Endothelial cell of umbilical vein (primary cell): ENCODE measurements at regions of chr12 and their contacts with region 1.

Region 1: DNA sequence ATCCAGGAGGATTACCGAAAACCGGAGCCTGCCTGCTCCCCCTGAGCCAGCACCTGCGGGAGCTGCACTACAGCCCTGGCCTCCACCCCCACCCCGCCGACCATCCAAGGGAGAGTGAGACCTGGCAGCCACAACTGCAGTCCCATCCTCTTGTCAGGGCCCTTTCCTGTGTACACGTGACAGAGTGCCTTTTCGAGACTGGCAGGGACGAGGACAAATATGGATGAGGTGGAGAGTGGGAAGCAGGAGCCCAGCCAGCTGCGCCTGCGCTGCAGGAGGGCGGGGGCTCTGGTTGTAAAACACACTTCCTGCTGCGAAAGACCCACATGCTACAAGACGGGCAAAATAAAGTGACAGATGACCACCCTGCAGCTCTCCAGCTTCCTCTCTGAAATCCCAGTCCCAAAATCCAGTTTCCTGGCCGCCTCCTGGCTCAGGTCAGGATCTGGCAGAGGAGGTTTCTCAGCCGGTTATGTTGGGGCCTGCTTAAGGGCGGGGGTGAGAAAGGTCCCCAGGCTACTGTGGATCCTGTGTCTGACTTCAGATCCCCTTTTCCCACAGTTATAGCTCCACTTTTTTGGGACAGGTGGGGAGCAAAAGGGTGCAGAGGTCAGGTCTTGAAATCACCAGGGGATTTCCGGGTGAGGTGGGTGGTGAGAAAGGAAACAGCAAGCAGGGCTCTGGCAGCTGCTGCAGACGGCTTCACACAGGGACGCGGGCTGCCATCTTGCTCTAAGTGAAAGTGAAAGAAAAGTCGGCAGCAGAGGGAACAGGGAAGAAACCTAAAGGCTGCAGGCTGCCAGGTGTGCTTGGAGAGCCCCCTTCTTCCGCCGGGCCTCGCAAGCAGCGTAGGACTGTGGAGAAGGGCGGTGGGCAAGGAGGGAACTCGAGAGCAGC is at the start of gene TAPBPL:
- DNase-seq: peak; percentile 89
- H3K4me3 ChIP-seq: peak within 1 kb of the TSS; percentile 6 to 51 (median 31)
- H3K27ac ChIP-seq: peak within 1 kb of the TSS; percentile 62
- H3K4me1 ChIP-seq: peaks cover 27% of the 10 kb centered on the region
- H3K27me3 ChIP-seq: no peaks in the 10 kb centered on the region
- CTCF ChIP-seq: no peak
- POLR2A ChIP-seq: peak; percentile 41
- total RNA-seq, gene TAPBPL: 9.9 and 11.7 TPM in 2 replicates

Region 2: DNA sequence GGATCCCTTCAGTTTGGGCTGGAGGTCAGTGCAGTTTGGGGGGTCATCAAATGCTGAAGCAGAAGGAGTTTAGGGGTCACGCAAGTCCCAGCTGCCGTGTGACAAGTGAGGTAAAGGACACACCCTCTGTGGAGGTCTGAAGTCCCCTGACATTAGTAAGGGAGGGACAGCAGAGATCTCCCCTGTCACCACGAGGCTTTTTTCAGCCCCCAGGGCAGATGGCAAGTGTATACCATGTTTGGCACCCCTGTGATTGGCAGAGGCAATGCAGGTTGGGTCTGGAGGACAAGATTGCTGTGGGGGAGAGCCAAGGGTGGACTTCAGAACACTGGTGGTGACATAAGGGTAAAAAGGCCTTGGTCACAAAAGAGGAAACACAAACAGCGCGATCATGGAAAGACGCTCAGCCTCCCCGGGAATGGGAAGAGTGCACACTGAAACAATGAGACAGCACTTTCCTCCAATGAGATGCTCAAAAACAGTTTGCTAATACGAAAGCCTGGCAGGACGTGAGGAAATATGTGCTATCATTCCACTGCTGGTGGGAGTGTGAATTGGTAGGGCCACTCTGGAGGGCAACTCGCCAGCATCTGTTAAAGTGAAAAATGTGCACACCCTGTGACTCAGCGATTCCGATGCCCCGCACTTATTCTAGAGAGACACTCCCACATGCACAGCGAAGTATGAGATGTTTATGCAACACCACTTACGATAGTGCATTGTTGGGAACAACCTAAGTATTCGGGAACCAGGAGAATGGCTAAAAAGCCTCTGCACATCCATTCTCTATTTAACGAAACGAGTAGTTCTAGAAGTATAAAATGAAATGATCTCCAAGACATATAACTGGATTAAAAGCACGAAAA is 21.2 kb before region 1 on chr12:
- CTCF ChIA-PET with region 1: interaction called, 5 read pairs
- POLR2A ChIA-PET with region 1: no interaction called
- dilution Hi-C with region 1: no loop called
- intact Hi-C with region 1: loop called (anchors 1 kb)
- DNase-seq: peak; percentile 97
- H3K4me3 ChIP-seq: peak overlapping the region in 1 of 3 experiments; percentile 4
- H3K27ac ChIP-seq: peak overlapping the region; percentile 96
- H3K4me1 ChIP-seq: peaks cover 18% of the 10 kb centered on the region
- H3K27me3 ChIP-seq: no peaks in the 10 kb centered on the region
- CTCF ChIP-seq: no peak
- POLR2A ChIP-seq: peak; percentile 44

Region 3: DNA sequence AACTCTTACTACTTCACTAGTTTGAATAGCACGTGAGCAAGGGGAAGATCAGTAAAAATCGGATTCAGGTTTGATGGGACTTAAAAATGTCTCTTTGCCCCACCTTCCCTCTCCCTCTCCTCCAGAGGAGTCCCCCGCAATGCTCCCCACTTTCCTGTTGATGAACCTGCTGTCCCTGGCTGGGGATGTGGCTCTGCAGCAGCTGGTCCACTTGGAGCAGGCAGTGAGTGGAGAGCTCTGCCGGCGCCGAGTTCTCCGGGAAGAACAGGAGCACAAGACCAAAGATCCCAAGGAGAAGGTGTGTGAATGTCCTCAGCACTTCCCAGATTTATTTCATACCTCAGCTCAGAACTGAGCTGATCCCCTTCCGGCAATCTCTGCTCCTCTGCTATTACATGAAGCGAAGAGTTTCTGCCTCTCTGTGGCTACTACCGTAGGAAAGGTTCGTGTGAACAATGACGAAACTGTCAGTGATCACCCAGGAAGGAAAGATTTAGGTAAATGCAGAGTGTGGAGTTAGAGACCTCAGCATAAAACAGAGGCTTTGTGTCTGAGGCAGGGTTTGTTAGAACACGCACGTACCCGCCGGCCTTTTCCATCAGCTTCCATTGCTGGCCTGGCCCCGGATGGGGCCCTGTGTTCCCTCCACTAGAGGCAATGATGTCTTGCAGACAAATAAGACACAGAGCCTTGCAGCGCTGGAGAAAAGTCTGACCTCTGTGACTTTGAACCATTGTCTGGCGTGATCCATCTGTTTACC is 75.3 kb after region 1 on chr12:
- CTCF ChIA-PET with region 1: no interaction called
- POLR2A ChIA-PET with region 1: no interaction called
- dilution Hi-C with region 1: no loop called
- intact Hi-C with region 1: no loop called
- DNase-seq: no peak
- H3K4me3 ChIP-seq: no peak overlapping the region
- H3K27ac ChIP-seq: no peak overlapping the region
- H3K4me1 ChIP-seq: peaks cover 3% of the 10 kb centered on the region
- H3K27me3 ChIP-seq: no peaks in the 10 kb centered on the region
- CTCF ChIP-seq: no peak
- POLR2A ChIP-seq: no peak